CD14-positive monocyte (primary cell): ENCODE measurements at regions of chr2 and their contacts with region 1.

Region 1: DNA sequence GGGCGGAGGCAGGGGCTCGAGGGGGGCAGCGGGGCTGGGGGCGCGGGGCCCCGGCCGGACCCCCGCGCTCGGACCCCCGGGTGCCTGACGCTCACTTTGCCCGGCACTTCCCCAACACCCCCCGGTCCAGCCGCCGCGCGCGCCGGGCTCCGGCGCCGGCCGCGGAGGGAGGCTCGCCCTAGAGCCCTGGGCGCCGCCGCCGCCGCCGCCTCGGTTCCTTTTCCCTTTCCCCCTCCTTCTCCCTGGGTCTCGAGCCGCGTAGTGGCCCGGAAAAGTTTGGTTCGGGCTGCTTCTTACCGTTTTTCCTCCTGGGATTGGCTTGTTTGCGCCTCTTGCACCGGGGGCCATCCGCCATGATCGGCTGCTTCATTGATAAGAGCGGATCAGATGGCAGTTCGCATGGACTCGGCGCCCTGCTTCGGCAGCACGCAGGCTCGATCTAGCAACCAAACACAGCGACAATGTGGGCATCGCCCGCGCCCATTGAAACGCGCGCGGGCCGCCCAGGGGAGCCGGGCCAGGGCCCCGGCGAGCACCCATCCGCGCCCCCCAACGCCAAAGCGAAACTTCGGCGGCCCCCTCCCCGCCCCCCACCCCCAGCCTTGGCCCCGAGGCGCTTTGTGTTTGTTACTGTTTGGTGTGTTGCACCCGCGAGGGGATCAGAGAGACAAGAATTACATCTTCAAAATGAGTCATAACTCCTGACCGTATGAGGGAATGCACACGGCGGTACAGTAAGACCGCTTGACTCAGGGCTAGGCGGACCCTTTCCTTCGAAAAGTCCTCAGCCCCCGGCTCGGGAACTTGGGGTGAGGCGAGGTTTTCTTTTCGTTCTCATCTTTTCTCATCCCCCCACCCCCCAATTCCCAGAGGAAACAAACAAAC is 2.7 kb downstream of the ZEB2 start:
- DNase-seq: peak; percentile 86 to 94 (median 87)
- H3K4me3 ChIP-seq: peak overlapping the region; percentile 92 to 100 (median 99)
- H3K4me3 Mint-ChIP-seq: no peak overlapping the region
- H3K27ac ChIP-seq: peak overlapping the region; percentile 99
- H3K27ac Mint-ChIP-seq: no peak overlapping the region
- H3K4me1 ChIP-seq: peaks cover 34 to 39% of the 10 kb centered on the region in 2 donors
- H3K4me1 Mint-ChIP-seq: peaks cover 36% of the 10 kb centered on the region
- H3K27me3 ChIP-seq: no peaks in the 10 kb centered on the region
- H3K27me3 Mint-ChIP-seq: no peaks in the 10 kb centered on the region
- CTCF ChIP-seq: no peak

Region 2: GRCh38 chr2:144607891-144608521 is 90.8 kb after region 1 on chr2:
- intact Hi-C with region 1: loop called in 1 of 2 experiments (anchors 5 kb)
- DNase-seq: peak; percentile 80 to 85 (median 84)
- H3K4me3 ChIP-seq: peak overlapping the region in 1 of 3 experiments; percentile 50
- H3K4me3 Mint-ChIP-seq: peak overlapping the region; percentile 28 to 76
- H3K27ac ChIP-seq: peak overlapping the region; percentile 92 to 96
- H3K27ac Mint-ChIP-seq: peak overlapping the region; percentile 94 to 99 (median 97)
- H3K4me1 ChIP-seq: peaks cover 59 to 67% of the 10 kb centered on the region in 2 donors
- H3K4me1 Mint-ChIP-seq: peaks cover 52% of the 10 kb centered on the region
- H3K27me3 ChIP-seq: no peaks in the 10 kb centered on the region
- H3K27me3 Mint-ChIP-seq: no peaks in the 10 kb centered on the region
- CTCF ChIP-seq: no peak

Region 3: DNA sequence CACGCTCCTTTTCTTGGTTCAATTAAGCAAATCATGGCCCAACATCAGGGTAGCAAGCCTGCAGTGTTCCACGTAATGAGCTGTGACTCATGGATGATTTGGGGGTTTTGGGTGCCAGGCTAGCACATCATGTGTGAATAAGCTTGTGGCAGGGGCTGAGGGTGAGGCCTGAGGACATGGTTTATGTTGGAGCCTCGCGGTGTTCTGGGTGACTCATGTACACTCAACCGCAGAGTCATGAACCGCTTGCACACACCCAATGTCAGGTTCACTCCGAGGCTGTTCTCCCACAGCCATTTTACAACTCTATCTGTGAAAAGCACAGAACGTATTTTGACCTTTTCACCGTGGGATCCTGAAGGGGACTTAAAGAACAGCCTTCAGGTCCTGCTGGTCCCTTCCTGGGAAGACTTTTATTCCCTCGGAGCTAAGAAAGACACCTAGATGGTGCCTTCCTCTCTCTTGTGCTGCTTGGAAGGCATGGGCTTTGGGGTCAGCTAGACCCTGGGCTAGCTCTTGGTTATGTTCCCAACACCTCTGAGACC is 142.6 kb after region 1 on chr2:
- intact Hi-C with region 1: loop called (anchors 2 to 5 kb)
- DNase-seq: peak; percentile 97 to 100 (median 97)
- H3K4me3 ChIP-seq: no peak overlapping the region
- H3K4me3 Mint-ChIP-seq: peak overlapping the region in 1 of 2 donors; percentile 48
- H3K27ac ChIP-seq: peak overlapping the region; percentile 94 to 100
- H3K27ac Mint-ChIP-seq: peak overlapping the region; percentile 99 to 100 (median 99)
- H3K4me1 ChIP-seq: peaks cover 51 to 68% of the 10 kb centered on the region in 2 donors
- H3K4me1 Mint-ChIP-seq: peaks cover 56% of the 10 kb centered on the region
- H3K27me3 ChIP-seq: no peaks in the 10 kb centered on the region
- H3K27me3 Mint-ChIP-seq: no peaks in the 10 kb centered on the region
- CTCF ChIP-seq: no peak

Region 4: GRCh38 chr2:144703852-144704708 is 186.9 kb after region 1 on chr2:
- intact Hi-C with region 1: loop called (anchors 2 to 5 kb)
- DNase-seq: peak; percentile 98 to 100 (median 99)
- H3K4me3 ChIP-seq: no peak overlapping the region
- H3K4me3 Mint-ChIP-seq: no peak overlapping the region
- H3K27ac ChIP-seq: peak overlapping the region; percentile 84 to 100
- H3K27ac Mint-ChIP-seq: peak overlapping the region; percentile 96 to 99 (median 99)
- H3K4me1 ChIP-seq: peaks cover 63 to 73% of the 10 kb centered on the region in 2 donors
- H3K4me1 Mint-ChIP-seq: peaks cover 65% of the 10 kb centered on the region
- H3K27me3 ChIP-seq: no peaks in the 10 kb centered on the region
- H3K27me3 Mint-ChIP-seq: no peaks in the 10 kb centered on the region
- CTCF ChIP-seq: no peak

Region 5: GRCh38 chr2:144730711-144731110 is 213.5 kb after region 1 on chr2:
- intact Hi-C with region 1: no loop called
- DNase-seq: no peak
- H3K4me3 ChIP-seq: no peak overlapping the region
- H3K4me3 Mint-ChIP-seq: no peak overlapping the region
- H3K27ac ChIP-seq: no peak overlapping the region
- H3K27ac Mint-ChIP-seq: no peak overlapping the region
- H3K4me1 ChIP-seq: no peaks in the 10 kb centered on the region
- H3K4me1 Mint-ChIP-seq: peaks cover 6% of the 10 kb centered on the region
- H3K27me3 ChIP-seq: no peaks in the 10 kb centered on the region
- H3K27me3 Mint-ChIP-seq: peaks cover 0 to 2% (median 0%) of the 10 kb centered on the region in 3 donors
- CTCF ChIP-seq: no peak

Region 6: DNA sequence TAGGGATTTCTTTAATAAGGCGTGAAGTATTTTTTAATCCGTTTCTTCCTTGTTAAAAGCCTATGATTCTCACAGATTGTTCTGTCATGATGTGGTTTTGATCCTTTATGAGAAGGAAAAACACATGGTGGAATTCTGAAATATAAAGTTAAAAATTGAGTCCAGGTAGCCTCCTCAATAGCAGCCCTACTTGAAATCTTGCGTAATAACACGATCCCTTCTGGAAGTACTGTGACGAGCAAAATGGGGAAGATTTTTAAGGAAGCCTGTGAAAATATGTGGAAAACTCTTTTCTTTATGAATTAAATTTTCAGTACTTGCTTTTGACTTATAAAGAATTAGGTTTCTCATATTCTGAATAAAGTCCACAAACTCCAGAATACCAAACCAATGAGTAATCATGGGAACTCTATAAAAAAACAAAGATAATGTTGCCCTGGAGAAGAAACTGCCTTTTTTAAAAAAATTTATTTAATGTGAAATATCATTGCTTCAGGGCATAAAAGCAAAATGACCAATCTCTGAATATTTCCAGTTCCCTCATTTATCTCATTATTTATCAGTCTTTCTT is 479.1 kb after region 1 on chr2:
- intact Hi-C with region 1: loop called in 1 of 2 experiments (anchors 5 kb)
- DNase-seq: no peak
- H3K4me3 ChIP-seq: peak overlapping the region in 1 of 3 experiments; percentile 39
- H3K4me3 Mint-ChIP-seq: no peak overlapping the region
- H3K27ac ChIP-seq: no peak overlapping the region
- H3K27ac Mint-ChIP-seq: no peak overlapping the region
- H3K4me1 ChIP-seq: peaks cover 0 to 13% of the 10 kb centered on the region in 2 donors
- H3K4me1 Mint-ChIP-seq: peaks cover 17% of the 10 kb centered on the region
- H3K27me3 ChIP-seq: no peaks in the 10 kb centered on the region
- H3K27me3 Mint-ChIP-seq: peaks cover 0 to 1% (median 0%) of the 10 kb centered on the region in 3 donors
- CTCF ChIP-seq: no peak

Region 7: GRCh38 chr2:145079641-145080040 is 562.4 kb after region 1 on chr2:
- intact Hi-C with region 1: no loop called
- DNase-seq: no peak
- H3K4me3 ChIP-seq: no peak overlapping the region
- H3K4me3 Mint-ChIP-seq: no peak overlapping the region
- H3K27ac ChIP-seq: no peak overlapping the region
- H3K27ac Mint-ChIP-seq: no peak overlapping the region
- H3K4me1 ChIP-seq: no peaks in the 10 kb centered on the region
- H3K4me1 Mint-ChIP-seq: no peaks in the 10 kb centered on the region
- H3K27me3 ChIP-seq: no peaks in the 10 kb centered on the region
- H3K27me3 Mint-ChIP-seq: no peaks in the 10 kb centered on the region
- CTCF ChIP-seq: no peak

Region 8: DNA sequence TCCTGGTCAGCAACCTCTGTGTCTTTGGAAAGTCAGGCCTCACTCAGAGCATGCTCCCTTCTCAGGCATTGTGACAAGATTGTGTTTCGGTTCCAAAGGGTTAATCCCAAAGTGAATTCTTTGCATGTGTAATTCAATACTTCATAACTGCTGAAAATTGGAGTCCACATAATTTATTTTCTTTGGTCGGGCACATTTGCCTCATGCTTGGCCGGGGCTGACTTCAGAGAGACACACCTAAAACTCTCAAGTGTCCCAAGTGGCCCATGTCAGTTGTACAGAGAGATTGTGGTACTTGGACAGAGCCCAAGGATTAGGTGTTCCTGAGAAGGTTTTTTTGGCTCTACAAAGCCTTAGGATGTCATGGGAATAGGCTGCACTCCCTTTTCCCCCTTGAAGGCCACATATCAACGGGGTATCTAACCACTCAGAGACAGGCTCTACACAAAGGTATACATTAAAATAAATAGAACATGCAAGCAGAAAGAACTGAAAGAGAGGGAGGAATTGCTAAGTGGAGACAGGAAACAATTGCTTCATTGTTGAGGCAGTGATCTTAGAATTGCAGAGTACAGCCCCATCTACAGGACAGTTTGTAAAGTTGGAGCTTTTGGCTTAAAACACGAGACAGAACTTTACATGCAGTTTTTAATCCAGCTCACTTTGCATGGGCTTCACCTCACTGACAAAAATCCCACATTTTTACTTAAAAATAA is 1235.0 kb after region 1 on chr2:
- intact Hi-C with region 1: loop called (anchors 5 to 10 kb)
- DNase-seq: peak; percentile 52 to 77 (median 70)
- H3K4me3 ChIP-seq: peak overlapping the region in 1 of 3 experiments; percentile 41
- H3K4me3 Mint-ChIP-seq: peak overlapping the region; percentile 28 to 67
- H3K27ac ChIP-seq: peak overlapping the region; percentile 53 to 90
- H3K27ac Mint-ChIP-seq: peak overlapping the region; percentile 78 to 97 (median 92)
- H3K4me1 ChIP-seq: peaks cover 30 to 34% of the 10 kb centered on the region in 2 donors
- H3K4me1 Mint-ChIP-seq: peaks cover 32% of the 10 kb centered on the region
- H3K27me3 ChIP-seq: no peaks in the 10 kb centered on the region
- H3K27me3 Mint-ChIP-seq: peaks cover 0 to 2% (median 0%) of the 10 kb centered on the region in 3 donors
- CTCF ChIP-seq: peak; percentile 78